ENCODE measurements at regions of chr20 and their contacts with region 1.

Region 1: GRCh38 chr20:59598625-59599310 is 5.6 kb upstream of the PHACTR3 start:
- DNase-seq: peak; percentile 85
- H3K4me3 ChIP-seq: no peak overlapping the region; a peak in 1 of 4 replicates
- H3K27ac ChIP-seq: no peak overlapping the region
- H3K4me1 ChIP-seq: no peaks in the 10 kb centered on the region; a peak in 1 of 4 replicates
- H3K27me3 ChIP-seq: no peaks in the 10 kb centered on the region; the same call in 1 of the 2 replicates
- CTCF ChIP-seq: peak; percentile 73
- EP300 ChIP-seq: no peak
- RAD21 ChIP-seq: peak; percentile 89

Region 2: DNA sequence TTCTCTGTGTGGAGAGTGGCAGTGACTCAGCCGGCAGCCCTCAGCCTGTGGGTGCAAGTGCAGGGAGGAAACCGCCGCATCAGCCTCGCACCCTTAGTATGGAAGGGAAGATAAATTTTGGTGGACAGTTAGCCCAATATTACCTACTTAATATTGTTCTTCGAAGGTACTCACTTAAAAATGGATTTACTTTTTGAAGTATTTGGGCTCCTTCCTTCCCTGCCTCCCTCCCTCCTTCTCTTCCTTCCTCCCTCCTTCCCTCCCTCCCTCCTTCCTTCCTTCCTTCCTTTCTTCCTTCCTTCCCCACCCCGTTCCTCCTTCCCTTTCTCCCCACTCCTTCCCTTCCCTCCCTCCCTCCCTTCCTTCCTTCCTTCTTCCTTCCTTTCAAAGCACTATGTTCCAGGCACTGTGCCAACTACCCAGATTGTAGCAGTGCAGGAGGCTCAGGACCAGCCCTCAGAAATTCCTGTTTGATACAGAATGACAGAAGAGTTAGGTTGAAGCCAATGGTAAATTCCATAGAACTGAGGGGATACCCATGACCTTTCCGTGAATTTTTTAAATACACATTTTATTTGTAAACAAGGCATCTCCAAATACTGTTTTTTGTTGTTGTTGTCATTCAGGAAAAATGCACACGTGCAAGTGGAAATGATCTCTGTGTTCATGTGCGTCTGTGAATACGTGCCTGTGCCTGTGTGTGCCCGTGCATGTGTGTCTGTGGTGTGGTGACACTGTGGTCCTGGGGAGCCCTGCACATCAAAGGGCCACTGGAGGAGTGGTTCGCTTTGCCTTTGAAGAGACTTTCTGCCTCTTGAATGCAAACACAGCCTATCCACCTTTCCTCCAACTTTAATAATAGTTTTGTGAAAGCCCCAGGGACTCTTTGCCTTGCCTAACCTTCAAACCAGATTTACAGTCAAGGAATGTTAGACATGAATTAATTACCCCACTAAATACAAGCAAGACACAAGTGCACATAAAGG is 156.6 kb before region 1 on chr20:
- CTCF ChIA-PET with region 1: no interaction called
- POLR2A ChIA-PET with region 1: no interaction called
- DNase-seq: peak; percentile 44
- H3K4me3 ChIP-seq: no peak overlapping the region
- H3K27ac ChIP-seq: peak overlapping the region in 1 of 2 experiments; percentile 58; a peak in 1 of 4 replicates
- H3K4me1 ChIP-seq: peaks cover 9 to 50% of the 10 kb centered on the region in 2 experiments; a peak in 3 of 4 replicates
- H3K27me3 ChIP-seq: no peaks in the 10 kb centered on the region
- CTCF ChIP-seq: no peak
- EP300 ChIP-seq: no peak
- RAD21 ChIP-seq: no peak

Region 3: DNA sequence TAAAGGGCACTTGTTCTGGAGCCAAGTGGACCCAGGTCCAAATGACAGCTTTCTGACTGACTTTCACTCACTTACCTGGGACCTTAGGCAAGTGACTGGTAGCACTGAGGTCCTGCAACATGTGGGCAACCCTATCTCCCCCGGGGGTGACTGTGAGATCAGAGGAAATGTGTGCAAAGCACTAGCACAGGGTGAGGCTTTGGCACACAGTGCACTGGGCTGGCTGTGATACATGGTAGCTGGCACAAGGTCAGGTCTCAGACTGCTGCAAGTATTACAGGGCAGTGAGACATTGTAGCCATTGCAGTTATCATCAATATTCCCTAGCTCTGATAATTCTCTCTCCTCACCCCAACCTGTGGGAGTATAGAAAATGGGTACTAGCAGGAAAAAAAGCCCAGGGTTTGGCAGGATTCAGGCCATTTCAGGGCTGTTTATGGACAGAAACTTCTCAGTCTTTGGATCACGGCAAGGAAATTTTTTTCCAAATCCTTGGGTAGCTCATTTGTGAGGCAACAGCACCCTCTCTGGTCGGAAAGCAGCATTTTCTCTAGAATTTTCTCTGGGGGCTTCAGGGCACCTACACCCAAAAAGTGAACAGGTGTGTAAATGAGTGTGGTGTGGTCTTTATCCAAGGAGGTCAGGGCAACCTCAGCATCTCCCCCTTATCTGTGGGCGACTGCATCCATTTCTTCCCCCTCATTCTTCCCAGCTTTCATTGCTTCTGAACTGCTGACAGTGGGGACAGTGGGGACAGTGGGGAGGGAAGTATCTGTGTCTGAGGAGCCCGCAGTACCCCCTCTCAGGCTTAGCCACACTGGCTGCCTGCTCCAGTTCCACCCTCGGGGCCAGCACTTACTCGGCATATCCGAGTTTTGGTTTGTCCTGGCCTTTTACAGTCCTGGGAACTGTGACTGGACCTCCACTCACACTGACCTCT is 143.1 kb before region 1 on chr20:
- CTCF ChIA-PET with region 1: no interaction called
- POLR2A ChIA-PET with region 1: no interaction called
- DNase-seq: peak; percentile 77
- H3K4me3 ChIP-seq: peak overlapping the region in 1 of 2 experiments; percentile 48; a peak in 1 of 4 replicates
- H3K27ac ChIP-seq: peak overlapping the region in 1 of 2 experiments; percentile 74; a peak in 2 of 4 replicates
- H3K4me1 ChIP-seq: peaks cover 0 to 24% of the 10 kb centered on the region in 2 experiments; a peak in 1 of 4 replicates
- H3K27me3 ChIP-seq: no peaks in the 10 kb centered on the region
- CTCF ChIP-seq: peak; percentile 81
- EP300 ChIP-seq: no peak
- RAD21 ChIP-seq: peak; percentile 89

Region 4: GRCh38 chr20:59583428-59584045 is 15.2 kb before region 1 on chr20:
- CTCF ChIA-PET with region 1: interaction called, 40 read pairs
- POLR2A ChIA-PET with region 1: no interaction called
- DNase-seq: no peak
- H3K4me3 ChIP-seq: no peak overlapping the region
- H3K27ac ChIP-seq: no peak overlapping the region
- H3K4me1 ChIP-seq: peaks cover 0 to 14% of the 10 kb centered on the region in 2 experiments; a peak in 3 of 4 replicates
- H3K27me3 ChIP-seq: no peaks in the 10 kb centered on the region
- CTCF ChIP-seq: no peak
- EP300 ChIP-seq: no peak
- RAD21 ChIP-seq: no peak

Region 5: DNA sequence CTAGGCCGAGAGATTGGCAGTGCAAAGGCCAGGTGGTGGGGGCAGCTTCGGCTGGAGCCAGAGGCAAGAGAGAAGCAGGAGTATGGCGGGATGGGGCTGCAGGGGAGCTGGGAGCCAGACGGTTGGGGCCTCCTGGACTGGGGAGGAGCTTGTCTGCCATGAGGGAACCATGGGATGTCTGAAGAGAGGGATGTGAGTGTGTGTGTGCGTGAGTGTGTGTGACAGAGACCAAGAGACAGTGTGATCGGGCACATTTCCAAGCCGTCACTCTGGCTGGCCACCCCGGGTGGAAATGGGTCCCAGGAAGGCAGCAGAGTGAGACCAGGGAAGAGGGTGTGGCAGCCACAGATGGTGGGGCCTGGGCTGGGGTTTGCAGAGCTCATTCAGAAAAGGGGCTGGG is 19.4 kb after region 1 on chr20:
- CTCF ChIA-PET with region 1: interaction called, 13 read pairs
- POLR2A ChIA-PET with region 1: no interaction called
- DNase-seq: peak; percentile 41
- H3K4me3 ChIP-seq: no peak overlapping the region
- H3K27ac ChIP-seq: no peak overlapping the region
- H3K4me1 ChIP-seq: peaks cover 0 to 6% of the 10 kb centered on the region in 2 experiments; a peak in 1 of 4 replicates
- H3K27me3 ChIP-seq: no peaks in the 10 kb centered on the region
- CTCF ChIP-seq: no peak
- EP300 ChIP-seq: no peak
- RAD21 ChIP-seq: no peak

Region 6: DNA sequence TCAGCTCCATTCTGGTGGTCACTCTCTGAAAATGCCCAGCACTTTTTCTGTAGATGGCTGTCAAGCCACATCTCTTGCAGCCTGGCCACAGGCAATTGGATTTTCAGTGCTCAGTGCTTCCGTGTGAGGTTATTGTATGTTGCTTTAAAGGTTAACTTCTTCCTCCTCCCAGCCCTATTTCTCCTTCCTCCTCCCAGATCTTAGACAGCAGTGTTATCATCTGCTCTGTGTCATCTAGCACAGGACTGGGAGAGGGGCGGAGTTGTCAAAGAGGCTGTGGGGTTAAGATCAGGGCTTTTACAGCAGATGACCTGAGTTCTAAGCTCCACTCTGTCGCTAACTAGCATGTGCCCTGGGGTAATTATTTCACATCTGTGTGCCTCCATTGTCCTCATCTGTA is 134.6 kb after region 1 on chr20:
- CTCF ChIA-PET with region 1: interaction called, 11 read pairs
- POLR2A ChIA-PET with region 1: no interaction called
- DNase-seq: no peak
- H3K4me3 ChIP-seq: no peak overlapping the region
- H3K27ac ChIP-seq: no peak overlapping the region
- H3K4me1 ChIP-seq: peaks cover 0 to 12% of the 10 kb centered on the region in 2 experiments; a peak in 2 of 4 replicates
- H3K27me3 ChIP-seq: no peaks in the 10 kb centered on the region
- CTCF ChIP-seq: no peak
- EP300 ChIP-seq: no peak
- RAD21 ChIP-seq: no peak

Region 7: DNA sequence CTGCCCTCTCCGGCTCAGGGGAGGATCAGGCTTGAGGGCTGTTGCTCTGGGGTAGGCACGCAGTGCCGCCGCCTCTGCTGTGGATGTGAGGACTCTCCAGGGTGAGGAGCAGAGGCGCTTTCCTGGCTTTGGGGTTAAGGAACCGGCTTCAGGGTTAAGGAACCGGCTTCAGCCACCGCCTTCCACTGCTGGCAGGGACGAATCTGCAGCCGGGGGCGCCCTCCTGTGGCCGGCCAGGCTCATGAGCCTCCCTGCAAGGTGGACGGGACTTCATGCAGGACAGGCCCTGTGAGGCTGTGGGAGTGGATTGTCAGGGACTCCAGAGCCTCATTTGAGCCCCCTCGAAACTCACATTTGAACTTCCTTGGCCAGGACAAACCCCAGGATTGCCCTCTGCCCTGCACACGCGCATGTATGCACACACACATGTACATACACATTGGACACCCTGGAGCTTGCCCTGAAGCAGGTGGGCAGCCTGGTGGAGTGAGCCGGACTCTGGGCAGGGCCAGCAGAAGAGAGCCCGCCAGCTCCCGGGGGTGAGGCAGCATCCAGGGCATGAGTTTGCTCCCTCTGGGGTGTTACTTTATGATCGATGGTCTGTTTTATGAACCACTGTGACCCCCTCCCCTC is 152.4 kb after region 1 on chr20:
- CTCF ChIA-PET with region 1: interaction called, 190 read pairs
- POLR2A ChIA-PET with region 1: no interaction called
- DNase-seq: peak; percentile 92
- H3K4me3 ChIP-seq: no peak overlapping the region; a peak in 1 of 4 replicates
- H3K27ac ChIP-seq: no peak overlapping the region
- H3K4me1 ChIP-seq: peaks cover 0 to 3% of the 10 kb centered on the region in 2 experiments; a peak in 1 of 4 replicates
- H3K27me3 ChIP-seq: no peaks in the 10 kb centered on the region
- CTCF ChIP-seq: peak; percentile 13
- EP300 ChIP-seq: no peak
- RAD21 ChIP-seq: peak; percentile 91

Region 8: DNA sequence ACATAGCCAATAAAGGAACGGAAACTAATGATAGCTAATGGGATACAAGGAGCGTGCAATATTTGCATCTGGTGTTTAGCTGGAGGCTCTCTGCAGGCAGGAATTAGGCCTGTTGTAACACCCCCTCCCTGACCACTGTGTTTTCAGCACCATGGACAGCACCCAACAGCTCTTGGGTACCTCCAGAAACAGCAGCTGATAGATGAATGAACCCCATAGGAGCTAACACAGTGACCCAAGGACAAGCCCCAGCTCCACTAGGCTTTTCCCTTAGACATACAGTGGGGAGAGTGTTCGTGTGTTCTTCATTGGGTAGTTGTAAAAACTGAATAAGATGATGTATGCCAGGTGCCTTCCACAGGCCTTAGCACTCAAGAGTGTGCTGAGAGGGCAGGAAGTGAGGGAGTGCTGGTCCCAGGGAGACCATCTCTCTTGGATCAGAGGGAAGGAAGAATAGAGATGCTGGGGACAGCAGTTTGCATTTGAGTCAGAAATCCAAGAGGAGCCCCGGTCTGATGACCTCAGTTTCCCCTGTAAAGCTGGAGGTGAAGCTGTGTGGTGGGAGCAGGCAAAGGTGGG is 166.9 kb after region 1 on chr20:
- CTCF ChIA-PET with region 1: interaction called, 18 read pairs
- POLR2A ChIA-PET with region 1: no interaction called
- DNase-seq: no peak
- H3K4me3 ChIP-seq: no peak overlapping the region
- H3K27ac ChIP-seq: no peak overlapping the region
- H3K4me1 ChIP-seq: no peaks in the 10 kb centered on the region
- H3K27me3 ChIP-seq: no peaks in the 10 kb centered on the region
- CTCF ChIP-seq: no peak
- EP300 ChIP-seq: no peak
- RAD21 ChIP-seq: no peak